MCF 10A (cell line): ENCODE measurements at regions of chr17 and their contacts with region 1.

Region 1: DNA sequence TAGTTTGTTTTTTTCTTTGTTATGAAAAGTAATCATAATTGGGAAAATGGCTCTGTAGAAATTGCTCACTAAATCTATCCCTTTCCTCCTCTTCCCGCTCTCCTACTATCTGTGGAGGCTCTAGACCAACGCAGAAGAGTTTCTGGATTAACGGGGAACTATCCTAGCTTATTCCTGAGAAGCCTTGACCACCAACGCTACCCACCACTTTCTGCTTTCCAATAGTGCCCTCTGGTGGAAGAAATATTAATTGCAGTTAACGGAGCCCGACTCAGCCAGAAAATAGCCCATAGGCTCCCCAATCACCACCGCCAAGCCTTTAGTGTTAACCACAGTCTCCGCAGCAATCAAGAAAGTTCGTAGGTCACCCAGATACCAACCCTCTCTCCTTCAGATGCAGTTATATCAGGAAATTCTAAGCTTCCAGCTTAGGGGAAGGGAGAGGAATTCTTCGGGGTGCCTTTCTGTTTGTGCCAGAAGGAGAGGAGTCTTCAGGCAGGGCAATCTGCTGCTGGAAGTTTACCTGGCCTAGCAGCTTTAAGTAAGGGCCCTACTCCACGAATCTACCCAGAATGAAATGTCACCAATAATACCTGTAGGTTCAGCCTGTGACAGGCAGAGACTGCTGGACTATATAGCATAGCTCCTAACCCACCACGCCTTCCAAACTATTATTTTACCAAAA is 23.0 kb upstream of the NSRP1 start:
- DNase-seq: peak; percentile 73
- H3K4me3 Mint-ChIP-seq: no peak overlapping the region
- H3K27ac Mint-ChIP-seq: no peak overlapping the region
- H3K4me1 Mint-ChIP-seq: peaks cover 14% of the 10 kb centered on the region
- H3K27me3 Mint-ChIP-seq: peaks cover 29% of the 10 kb centered on the region
- CTCF ChIP-seq: peak; percentile 78

Region 2: DNA sequence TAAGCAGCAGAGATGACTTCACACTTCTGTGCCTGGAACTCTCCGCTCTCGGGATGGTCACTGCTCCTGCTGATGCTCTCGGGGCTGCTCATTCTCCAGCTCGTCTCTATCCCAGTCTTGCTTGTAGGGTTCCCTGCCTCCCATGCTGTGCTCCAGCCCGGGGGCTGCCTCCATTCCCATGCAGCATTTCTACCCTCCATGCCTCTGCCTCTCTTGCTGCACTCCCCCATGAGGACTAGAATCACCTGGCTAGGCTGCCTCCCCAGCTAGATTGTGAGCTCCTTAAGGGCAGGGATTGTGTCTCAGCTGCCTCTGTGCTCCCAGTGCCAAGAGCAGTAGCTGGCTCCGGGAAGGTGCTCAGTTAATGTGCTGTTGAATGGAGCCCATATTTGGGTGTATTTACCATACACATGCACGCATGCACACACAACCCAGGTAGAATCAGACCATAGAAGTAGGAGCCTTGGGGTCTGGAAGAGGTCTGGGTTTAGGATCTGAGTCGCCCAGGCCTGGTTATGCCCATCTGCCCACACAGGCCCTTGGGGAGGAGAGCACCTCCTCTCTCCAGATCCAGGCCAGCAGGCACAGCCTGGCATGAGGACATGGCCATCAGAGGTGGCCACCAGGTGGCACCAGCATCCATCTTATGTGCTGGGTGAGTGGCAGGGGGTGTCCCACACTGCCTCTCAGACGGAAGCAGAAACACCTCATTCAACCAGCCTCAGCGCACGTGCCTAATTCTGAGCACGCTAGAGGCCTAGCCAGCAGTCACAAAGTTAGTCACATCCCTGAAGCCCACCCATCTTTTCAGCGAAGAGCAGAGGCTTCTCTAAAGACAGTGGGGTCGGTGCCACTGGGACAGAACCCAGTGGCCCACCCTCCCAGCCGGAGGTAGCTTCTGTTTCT is 513.5 kb before region 1 on chr17:
- CTCF ChIA-PET with region 1: no interaction called
- POLR2A ChIA-PET with region 1: no interaction called
- intact Hi-C with region 1: loop called (anchors 5 kb)
- DNase-seq: peak; percentile 87
- H3K4me3 Mint-ChIP-seq: peak overlapping the region; percentile 50
- H3K27ac Mint-ChIP-seq: peak overlapping the region; percentile 61
- H3K4me1 Mint-ChIP-seq: peaks cover 36% of the 10 kb centered on the region
- H3K27me3 Mint-ChIP-seq: no peaks in the 10 kb centered on the region
- CTCF ChIP-seq: peak; percentile 79

Region 3: GRCh38 chr17:29807520-29808351 is 285.9 kb before region 1 on chr17:
- CTCF ChIA-PET with region 1: interaction called, 47 read pairs
- POLR2A ChIA-PET with region 1: interaction called, 3 read pairs
- intact Hi-C with region 1: loop called (anchors 1 kb)
- DNase-seq: peak; percentile 74
- H3K4me3 Mint-ChIP-seq: no peak overlapping the region
- H3K27ac Mint-ChIP-seq: no peak overlapping the region
- H3K4me1 Mint-ChIP-seq: no peaks in the 10 kb centered on the region
- H3K27me3 Mint-ChIP-seq: no peaks in the 10 kb centered on the region
- CTCF ChIP-seq: peak; percentile 74

Region 4: GRCh38 chr17:30021708-30022317 is 71.8 kb before region 1 on chr17:
- CTCF ChIA-PET with region 1: interaction called, 25 read pairs
- POLR2A ChIA-PET with region 1: interaction called, 3 read pairs
- intact Hi-C with region 1: loop called (anchors 1 kb)
- DNase-seq: peak; percentile 66
- H3K4me3 Mint-ChIP-seq: no peak overlapping the region
- H3K27ac Mint-ChIP-seq: no peak overlapping the region
- H3K4me1 Mint-ChIP-seq: no peaks in the 10 kb centered on the region
- H3K27me3 Mint-ChIP-seq: peaks cover 12% of the 10 kb centered on the region
- CTCF ChIP-seq: peak; percentile 73

Region 5: DNA sequence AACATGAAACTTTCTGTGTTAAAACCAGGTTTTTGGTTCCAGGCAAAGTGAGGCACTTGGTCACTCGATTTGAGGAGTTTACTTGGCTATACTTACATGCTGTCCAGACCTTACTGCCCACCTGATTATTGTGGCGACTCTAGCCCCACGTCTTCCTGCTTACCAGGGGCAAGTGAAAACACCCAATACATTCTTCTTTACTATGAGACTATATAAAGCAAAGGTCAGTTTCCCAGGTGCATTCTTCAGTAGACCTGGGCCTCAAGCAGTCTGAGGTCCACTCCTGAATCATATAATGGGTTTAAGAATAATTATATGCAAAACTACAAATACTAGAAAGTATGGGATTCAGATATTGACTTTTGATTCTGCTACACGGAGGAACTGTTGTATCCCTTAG is 65.9 kb before region 1 on chr17:
- CTCF ChIA-PET with region 1: interaction called, 25 read pairs
- POLR2A ChIA-PET with region 1: interaction called, 4 read pairs
- intact Hi-C with region 1: loop called (anchors 1 kb)
- DNase-seq: no peak
- H3K4me3 Mint-ChIP-seq: no peak overlapping the region
- H3K27ac Mint-ChIP-seq: no peak overlapping the region
- H3K4me1 Mint-ChIP-seq: no peaks in the 10 kb centered on the region
- H3K27me3 Mint-ChIP-seq: peaks cover under 1% of the 10 kb centered on the region
- CTCF ChIP-seq: no peak

Region 6: DNA sequence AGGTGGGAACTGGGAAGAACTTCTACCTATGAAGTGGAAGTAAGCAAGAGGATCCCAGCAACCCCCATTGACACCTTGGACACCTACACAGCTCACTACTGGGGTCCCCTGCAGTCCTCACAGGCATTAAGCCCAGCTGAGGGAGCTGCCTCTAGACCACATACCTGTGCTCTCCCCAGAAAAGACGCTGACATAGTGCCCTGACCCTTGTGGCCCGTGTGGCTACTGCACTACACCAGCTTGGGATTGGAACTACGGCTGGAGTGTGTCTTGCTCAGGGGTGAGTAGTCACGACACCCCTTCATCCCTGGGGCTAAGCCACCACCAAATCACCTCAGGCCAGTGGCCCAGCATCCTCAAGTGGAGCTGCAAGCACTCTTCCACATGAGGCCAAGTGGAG is 31.2 kb before region 1 on chr17:
- CTCF ChIA-PET with region 1: interaction called, 10 read pairs
- POLR2A ChIA-PET with region 1: no interaction called
- intact Hi-C with region 1: no loop called
- DNase-seq: no peak
- H3K4me3 Mint-ChIP-seq: no peak overlapping the region
- H3K27ac Mint-ChIP-seq: no peak overlapping the region
- H3K4me1 Mint-ChIP-seq: no peaks in the 10 kb centered on the region
- H3K27me3 Mint-ChIP-seq: peaks cover 53% of the 10 kb centered on the region
- CTCF ChIP-seq: no peak

Region 7: GRCh38 chr17:30074730-30075129 is 18.9 kb before region 1 on chr17:
- CTCF ChIA-PET with region 1: interaction called, 11 read pairs
- POLR2A ChIA-PET with region 1: interaction called, 3 read pairs
- intact Hi-C with region 1: no loop called
- DNase-seq: no peak
- H3K4me3 Mint-ChIP-seq: no peak overlapping the region
- H3K27ac Mint-ChIP-seq: no peak overlapping the region
- H3K4me1 Mint-ChIP-seq: no peaks in the 10 kb centered on the region
- H3K27me3 Mint-ChIP-seq: peaks cover 73% of the 10 kb centered on the region
- CTCF ChIP-seq: no peak